ENCODE measurements at regions of chr7 and their contacts with region 1.

Region 1: DNA sequence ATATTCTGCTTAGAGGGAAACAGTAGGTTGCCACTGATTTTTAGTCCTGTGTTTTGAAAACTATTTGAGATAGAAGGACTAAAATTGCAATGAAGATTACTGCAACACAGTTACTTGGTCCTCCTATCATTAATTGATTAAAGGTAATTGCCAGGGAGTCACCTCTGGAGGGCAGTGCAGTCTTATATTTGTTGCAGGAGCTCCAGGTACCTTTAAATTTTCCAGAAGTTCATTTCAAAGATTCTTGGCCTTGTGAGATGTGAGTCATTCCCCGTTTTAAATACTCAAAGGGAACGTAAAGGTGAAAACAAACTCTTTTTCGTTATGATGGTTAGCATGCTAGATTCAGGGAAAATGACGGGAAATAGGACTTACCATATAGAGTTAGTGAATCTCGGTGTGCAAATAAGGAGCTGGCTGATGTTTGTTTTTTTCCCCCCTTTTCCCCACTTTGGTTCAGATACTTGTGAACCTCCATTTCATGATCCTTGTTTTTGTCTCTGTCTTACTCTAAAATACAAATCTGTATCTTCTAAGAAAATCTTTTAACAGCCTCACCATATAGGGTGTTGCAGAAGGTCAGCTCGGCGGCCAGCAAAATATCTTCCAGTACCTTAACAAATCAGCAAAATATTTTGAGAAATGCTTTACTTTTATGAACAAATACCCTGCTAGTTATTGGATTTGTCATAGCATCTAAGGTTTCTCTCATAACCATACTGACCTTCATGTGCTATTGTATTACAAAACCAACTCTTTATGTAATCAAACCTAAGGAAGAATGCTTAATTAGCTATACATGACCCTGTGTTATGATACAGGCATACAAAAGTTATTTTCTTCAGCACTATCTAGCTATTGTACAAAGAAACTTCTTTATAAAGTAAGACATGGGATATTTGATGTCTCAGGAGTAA is 143.0 kb upstream of the HDAC9 start:
- DNase-seq: peak; percentile 56 to 77
- H3K4me3 ChIP-seq: peak overlapping the region; percentile 16; the same call in 1 of the 2 replicates
- H3K27ac ChIP-seq: no peak overlapping the region
- H3K4me1 ChIP-seq: peaks cover 6% of the 10 kb centered on the region
- H3K27me3 ChIP-seq: no peaks in the 10 kb centered on the region
- CTCF ChIP-seq: peak; percentile 92

Region 2: DNA sequence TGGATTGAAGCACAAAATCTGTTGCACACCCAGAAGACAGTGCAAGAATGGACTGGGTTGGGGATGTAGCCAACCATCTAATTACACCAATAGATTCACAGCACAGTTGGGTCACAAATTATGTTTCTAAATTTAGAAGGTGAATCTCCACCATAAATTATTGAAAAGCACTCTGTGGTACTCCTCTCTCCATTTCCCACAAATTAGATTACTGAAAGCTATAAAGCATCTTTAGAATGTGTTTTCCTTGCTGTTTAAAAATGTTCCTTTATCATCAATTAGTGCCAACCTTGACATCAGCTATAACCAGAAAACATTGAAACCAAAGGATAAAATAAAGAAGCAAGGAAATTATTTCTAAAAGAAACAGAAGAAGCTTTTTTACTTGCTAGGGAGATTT is 103.0 kb after region 1 on chr7:
- CTCF ChIA-PET with region 1: no interaction called
- POLR2A ChIA-PET with region 1: no interaction called
- intact Hi-C with region 1: no loop called
- DNase-seq: no peak
- H3K4me3 ChIP-seq: no peak overlapping the region
- H3K27ac ChIP-seq: no peak overlapping the region
- H3K4me1 ChIP-seq: peaks cover 11% of the 10 kb centered on the region
- H3K27me3 ChIP-seq: no peaks in the 10 kb centered on the region
- CTCF ChIP-seq: no peak

Region 3: DNA sequence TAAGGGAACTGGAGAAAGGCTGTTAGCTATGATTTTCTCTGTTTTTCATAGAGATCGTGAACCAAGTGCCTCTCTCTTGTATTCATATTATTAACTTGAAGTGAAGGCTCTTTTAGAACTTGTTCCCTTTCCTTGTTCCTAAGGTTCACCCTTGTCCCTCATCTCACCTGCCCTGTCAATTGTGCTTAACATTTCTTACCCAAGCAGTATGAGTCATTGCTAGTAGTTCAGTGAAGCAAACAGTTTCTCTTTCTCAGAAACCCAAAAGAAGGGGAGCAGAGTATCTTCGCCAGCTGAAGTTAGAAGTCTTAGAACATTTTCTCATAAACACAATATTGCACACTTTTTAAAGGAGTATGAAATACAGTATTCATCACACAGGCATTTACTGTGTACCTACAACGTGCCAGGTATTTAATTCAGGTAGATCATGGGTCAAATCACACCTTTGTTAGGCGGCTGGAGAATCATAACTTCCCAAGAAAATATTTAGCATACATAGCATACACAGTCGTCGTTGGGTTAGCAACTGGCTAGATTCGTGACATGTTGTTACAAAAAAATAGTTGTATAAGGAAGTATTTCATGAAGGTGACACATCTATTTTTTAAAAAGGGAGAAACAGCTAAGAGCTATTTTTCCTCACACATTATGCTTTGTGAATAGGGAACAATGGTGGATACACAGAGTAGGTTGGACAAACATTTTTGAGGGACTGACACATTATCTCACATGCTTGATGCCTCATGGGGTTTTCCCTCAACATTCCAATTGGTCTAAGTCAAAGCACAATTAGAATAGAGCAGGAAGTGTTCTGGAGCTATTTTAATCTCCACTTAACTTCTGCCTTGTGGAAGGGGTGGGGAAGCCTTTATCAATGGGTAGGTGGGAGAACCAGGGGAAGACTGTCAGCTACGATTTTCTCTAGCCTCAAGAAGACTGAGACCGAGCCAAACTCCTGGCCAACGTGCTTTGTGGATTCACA is 156.1 kb after region 1 on chr7:
- CTCF ChIA-PET with region 1: no interaction called
- POLR2A ChIA-PET with region 1: no interaction called
- intact Hi-C with region 1: loop called (anchors 1 kb)
- DNase-seq: peak; percentile 59 to 99
- H3K4me3 ChIP-seq: peak overlapping the region; percentile 59
- H3K27ac ChIP-seq: peak overlapping the region; percentile 98
- H3K4me1 ChIP-seq: peaks cover 37% of the 10 kb centered on the region
- H3K27me3 ChIP-seq: no peaks in the 10 kb centered on the region
- CTCF ChIP-seq: no peak; the same call in 1 of the 2 replicates

Region 4: DNA sequence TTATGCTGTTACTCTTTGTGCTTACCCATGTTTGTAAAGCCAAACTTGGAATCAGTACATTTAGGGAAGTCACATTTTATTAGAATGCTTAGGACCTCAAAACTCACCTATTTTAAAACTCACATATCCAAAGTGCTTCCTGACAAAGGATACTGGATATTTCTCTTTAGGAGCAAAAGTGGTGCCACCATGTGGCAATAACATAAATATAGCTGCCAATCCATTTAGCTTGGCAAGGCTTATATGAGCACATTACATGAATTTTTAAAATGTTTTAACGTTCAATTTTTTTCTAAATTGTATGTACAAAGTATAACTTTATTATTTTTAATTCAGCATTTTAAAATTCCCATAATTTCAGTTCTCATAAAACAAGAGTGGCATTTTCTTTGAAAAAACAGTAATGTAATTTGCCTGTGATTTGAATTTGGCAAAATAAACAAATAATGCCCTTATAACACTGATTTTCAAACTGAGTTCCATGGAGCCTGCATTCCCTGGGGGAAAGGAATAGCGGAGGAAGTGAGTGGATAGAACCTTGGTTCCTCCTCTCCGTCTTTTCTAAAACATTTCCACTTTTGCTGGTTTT is 218.4 kb after region 1 on chr7:
- CTCF ChIA-PET with region 1: interaction called, 31 read pairs
- POLR2A ChIA-PET with region 1: interaction called, 3 read pairs
- intact Hi-C with region 1: loop called (anchors 1 kb)
- DNase-seq: peak in 1 of 2 experiments; percentile 63
- H3K4me3 ChIP-seq: no peak overlapping the region
- H3K27ac ChIP-seq: no peak overlapping the region
- H3K4me1 ChIP-seq: no peaks in the 10 kb centered on the region
- H3K27me3 ChIP-seq: no peaks in the 10 kb centered on the region
- CTCF ChIP-seq: peak; percentile 78

Region 5: DNA sequence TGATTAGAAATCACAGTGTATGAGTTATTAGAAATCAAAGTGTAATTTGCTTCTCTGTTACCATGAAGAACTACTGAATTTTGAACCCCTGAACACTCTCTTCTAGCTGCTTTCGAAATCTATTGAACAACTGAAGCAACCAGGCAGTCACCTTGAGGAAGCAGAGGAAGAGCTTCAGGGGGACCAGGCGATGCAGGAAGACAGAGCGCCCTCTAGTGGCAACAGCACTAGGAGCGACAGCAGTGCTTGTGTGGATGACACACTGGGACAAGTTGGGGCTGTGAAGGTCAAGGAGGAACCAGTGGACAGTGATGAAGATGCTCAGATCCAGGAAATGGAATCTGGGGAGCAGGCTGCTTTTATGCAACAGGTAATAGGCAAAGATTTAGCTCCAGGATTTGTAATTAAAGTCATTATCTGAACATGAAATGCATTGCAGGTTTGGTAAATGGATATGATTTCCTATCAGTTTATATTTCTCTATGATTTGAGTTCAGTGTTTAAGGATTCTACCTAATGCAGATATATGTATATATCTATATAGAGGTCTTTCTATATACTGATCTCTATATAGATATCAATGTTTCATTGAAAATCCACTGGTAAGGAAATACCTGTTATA is 313.6 kb after region 1 on chr7:
- CTCF ChIA-PET with region 1: interaction called, 5 read pairs
- POLR2A ChIA-PET with region 1: no interaction called
- intact Hi-C with region 1: loop called (anchors 1 kb)
- DNase-seq: peak; percentile 57 to 73
- H3K4me3 ChIP-seq: no peak overlapping the region
- H3K27ac ChIP-seq: no peak overlapping the region
- H3K4me1 ChIP-seq: no peaks in the 10 kb centered on the region
- H3K27me3 ChIP-seq: no peaks in the 10 kb centered on the region
- CTCF ChIP-seq: peak; percentile 99

Region 6: DNA sequence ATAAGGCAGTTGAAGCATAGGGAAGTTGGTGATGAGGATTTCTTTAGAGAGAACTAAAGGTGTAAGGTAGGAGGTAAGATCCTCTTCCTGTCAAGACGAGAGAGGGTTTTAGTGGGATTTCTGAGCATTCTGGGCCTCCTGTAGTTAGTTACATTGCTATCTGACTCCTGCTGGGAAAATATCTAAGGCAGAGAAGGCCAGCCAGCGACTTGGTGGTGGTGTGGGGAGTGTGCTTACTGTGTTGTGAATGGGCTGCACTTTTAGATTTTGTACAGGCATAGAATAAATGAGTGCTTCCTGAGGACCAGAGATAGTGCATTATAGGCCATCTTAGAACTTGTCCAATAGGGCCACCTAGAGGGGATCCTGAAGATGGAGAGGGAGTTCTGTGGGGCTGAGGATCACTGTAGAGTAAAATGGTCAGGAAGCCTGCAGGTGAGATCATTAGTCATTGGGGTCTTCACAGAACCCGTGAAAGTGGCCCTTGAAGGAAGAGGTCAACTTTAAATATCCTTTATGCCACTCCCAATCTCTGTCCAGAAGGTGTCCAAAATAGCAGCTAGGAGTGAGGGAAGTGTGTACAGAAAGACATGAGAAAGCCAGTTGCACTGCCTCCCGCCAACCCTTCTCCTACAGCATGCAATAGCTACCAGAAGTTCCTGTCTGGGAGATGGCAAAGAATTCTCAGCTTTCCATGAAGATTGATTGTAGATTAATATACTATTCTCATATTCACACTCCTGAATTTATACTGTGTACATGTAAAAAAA is 1089.6 kb after region 1 on chr7:
- CTCF ChIA-PET with region 1: interaction called, 3 read pairs
- POLR2A ChIA-PET with region 1: no interaction called
- intact Hi-C with region 1: loop called (anchors 5 kb)
- DNase-seq: peak in 1 of 2 experiments; percentile 18
- H3K4me3 ChIP-seq: no peak overlapping the region
- H3K27ac ChIP-seq: no peak overlapping the region
- H3K4me1 ChIP-seq: no peaks in the 10 kb centered on the region
- H3K27me3 ChIP-seq: no peaks in the 10 kb centered on the region
- CTCF ChIP-seq: peak; percentile 61

Region 7: GRCh38 chr7:19491821-19492452 is 1139.3 kb after region 1 on chr7:
- CTCF ChIA-PET with region 1: interaction called, 5 read pairs
- POLR2A ChIA-PET with region 1: no interaction called
- intact Hi-C with region 1: loop called (anchors 5 kb)
- DNase-seq: peak in 1 of 2 experiments; percentile 21
- H3K4me3 ChIP-seq: 0 out of 2 replicates have a peak overlapping the region, but pooled peaks have one; percentile 11
- H3K27ac ChIP-seq: no peak overlapping the region
- H3K4me1 ChIP-seq: no peaks in the 10 kb centered on the region
- H3K27me3 ChIP-seq: no peaks in the 10 kb centered on the region
- CTCF ChIP-seq: peak; percentile 88

Region 8: DNA sequence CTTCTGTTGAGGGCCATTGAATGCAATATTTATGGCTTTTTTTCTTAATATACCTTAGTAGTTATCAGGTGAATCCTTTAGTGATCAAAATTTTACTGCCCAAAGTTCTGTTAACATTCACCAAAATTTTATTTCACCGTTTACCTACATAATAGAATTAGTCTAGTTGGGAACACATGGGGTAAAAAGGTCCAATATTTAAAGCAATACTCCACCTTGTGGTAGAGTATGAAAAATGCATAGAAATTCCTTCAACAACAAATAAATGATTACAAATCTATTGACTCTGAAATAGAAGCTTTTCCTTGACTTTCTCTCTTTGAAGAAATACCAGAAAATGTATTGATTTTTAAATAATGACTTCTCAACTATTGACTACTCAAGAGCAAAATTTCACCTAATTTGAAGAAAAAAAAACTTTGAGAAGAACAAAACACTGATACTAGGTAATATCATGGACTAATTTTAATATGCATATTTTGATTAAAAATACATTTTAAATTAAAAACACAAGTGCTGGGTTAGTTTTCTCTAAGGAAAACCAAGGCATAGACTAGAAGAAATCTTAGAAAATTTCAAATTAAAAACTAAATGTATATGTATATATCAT is 1312.9 kb after region 1 on chr7:
- CTCF ChIA-PET with region 1: no interaction called
- POLR2A ChIA-PET with region 1: no interaction called
- intact Hi-C with region 1: loop called (anchors 1 kb)
- DNase-seq: no peak
- H3K4me3 ChIP-seq: no peak overlapping the region
- H3K27ac ChIP-seq: no peak overlapping the region
- H3K4me1 ChIP-seq: peaks cover 10% of the 10 kb centered on the region; the same call in 1 of the 2 replicates
- H3K27me3 ChIP-seq: no peaks in the 10 kb centered on the region
- CTCF ChIP-seq: peak; percentile 90

Measured in PC-9 (cell line).